ENCODE measurements at regions of chr12 and their contacts with region 1.

Region 1: DNA sequence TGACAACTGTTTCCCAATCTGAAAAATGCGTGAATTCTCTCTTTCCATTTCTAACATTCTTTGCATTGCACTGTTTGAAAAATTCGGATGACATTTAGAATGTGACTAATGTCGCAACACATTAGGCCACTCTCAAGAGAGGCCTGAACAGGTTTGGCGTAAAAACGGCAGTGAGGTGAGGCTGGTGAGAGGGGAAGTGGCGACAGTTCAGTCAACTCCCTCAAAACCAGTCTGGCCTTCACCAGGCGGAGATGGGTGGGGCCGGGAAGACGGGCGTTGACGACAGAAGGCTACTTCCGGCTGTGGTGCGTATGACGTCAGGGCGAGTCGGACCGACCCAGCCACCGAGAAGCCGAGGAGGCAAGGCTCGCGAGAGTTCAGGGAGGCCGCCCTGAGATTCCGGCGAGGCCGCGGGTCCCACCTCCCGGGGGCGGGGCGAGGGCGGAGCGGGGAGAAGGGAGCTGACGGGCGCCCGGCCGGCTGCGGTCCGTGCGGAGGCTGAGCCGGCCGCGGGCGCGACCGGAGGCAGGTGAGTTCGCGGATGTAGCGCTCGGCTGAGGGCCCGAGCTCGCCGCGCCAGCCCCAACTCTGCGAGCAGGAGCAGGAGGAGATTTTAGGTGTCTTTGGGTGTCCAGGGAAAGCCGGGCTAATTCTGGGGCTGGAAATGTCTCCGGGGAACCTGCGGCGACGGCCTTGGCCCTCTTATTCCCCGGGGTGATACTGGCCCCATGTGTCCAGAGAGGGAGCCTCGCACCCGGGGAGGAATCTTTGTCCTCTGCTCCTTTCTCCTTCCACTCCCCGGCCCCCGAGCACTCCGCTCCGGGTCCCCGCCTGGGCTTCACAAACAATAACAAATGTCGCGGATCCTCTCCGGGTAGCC is at the start of gene STK38L:
- DNase-seq: peak; percentile 99
- ATAC-seq: peak; percentile 99
- H3K4me3 ChIP-seq: peak within 1 kb of the TSS; percentile 36 to 79
- H3K27ac ChIP-seq: peak within 1 kb of the TSS; percentile 83 to 94
- H3K4me1 ChIP-seq: peaks cover 0 to 7% of the 10 kb centered on the region in 2 donors
- H3K27me3 ChIP-seq: no peaks in the 10 kb centered on the region
- total RNA-seq, gene STK38L: 218 to 414 TPM

Region 2: GRCh38 chr12:27193854-27194544 is 50.0 kb before region 1 on chr12:
- intact Hi-C with region 1: loop called (anchors 2 to 5 kb)
- DNase-seq: peak; percentile 82 to 85
- ATAC-seq: peak; percentile 83
- H3K4me3 ChIP-seq: no peak overlapping the region
- H3K27ac ChIP-seq: peak overlapping the region; percentile 26 to 99
- H3K4me1 ChIP-seq: peaks cover 2 to 10% of the 10 kb centered on the region in 2 donors
- H3K27me3 ChIP-seq: no peaks in the 10 kb centered on the region

Region 3: DNA sequence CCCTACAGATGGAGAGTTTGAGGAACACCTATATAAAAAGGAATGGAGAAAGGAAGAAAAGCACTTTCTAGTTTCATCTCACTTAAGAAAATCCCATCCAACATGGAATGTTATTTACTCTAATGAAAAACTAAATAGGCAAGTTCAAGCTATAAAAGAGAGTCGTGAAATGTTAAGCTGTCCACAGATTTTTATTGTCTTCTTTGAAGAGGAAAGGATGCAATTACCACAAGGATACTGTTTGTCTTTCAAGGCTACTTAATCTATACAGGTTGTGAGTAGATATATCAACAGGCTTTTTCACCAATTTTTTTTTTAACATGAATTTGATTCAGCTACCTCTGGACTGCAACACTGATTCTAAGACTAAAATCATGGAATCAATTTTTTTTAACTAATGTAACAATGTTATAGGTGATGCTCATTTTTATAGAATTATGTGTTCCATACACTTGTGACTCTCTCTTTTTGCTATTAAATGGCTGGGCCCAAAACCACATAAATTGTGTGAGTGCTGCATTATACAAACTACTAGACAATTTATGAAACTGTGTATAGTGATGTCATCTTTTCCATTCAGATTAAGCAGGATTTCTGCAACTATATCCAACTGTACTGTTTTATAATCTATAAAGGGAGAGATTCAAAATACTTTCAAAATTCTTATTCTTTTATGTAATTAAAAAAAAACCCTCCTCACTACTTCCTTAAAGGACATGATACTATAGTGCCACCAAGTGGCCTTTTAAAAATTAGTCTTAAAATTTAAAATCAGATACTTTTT is 61.8 kb after region 1 on chr12:
- intact Hi-C with region 1: loop called in 1 of 2 experiments (anchors 2 kb)
- DNase-seq: no peak
- ATAC-seq: peak; percentile 73
- H3K4me3 ChIP-seq: no peak overlapping the region
- H3K27ac ChIP-seq: no peak overlapping the region
- H3K4me1 ChIP-seq: no peaks in the 10 kb centered on the region
- H3K27me3 ChIP-seq: no peaks in the 10 kb centered on the region